Activated B cell treated with CpG ODN at 0.5 μM for 24 hours (primary cell): ENCODE measurements at regions of chrX and their contacts with region 1.

Region 1: GRCh38 chrX:139126493-139126892 is 404.0 kb upstream of the F9 start:
- DNase-seq: no peak
- ATAC-seq: no peak
- H3K4me3 Mint-ChIP-seq: no peak overlapping the region
- H3K27ac Mint-ChIP-seq: no peak overlapping the region
- H3K4me1 Mint-ChIP-seq: no peaks in the 10 kb centered on the region
- H3K27me3 Mint-ChIP-seq: peaks cover 2% of the 10 kb centered on the region
- CTCF ChIP-seq: no peak

Region 2: DNA sequence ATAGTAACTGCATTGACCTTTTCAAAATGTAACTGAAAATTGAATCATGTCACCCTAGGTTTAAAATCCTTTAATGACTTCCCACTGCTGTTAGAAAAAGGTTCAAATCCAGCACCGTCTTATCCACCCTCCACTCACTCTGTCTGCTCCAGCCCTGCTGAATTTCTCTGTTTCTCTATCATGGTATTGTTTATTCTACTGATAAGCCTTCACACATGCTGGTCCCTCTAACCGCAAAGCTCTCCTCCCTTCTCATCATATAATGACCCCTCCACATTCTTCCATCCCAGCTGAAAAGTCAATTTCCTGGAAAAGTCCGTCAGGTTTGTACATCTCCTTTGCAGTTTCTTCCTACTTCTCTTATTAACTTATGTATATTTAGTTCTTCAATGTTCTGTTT is 14.9 kb after region 1 on chrX:
- CTCF ChIA-PET with region 1: no interaction called
- POLR2A ChIA-PET with region 1: no interaction called
- intact Hi-C with region 1: no loop called
- DNase-seq: no peak
- ATAC-seq: no peak
- H3K4me3 Mint-ChIP-seq: no peak overlapping the region
- H3K27ac Mint-ChIP-seq: no peak overlapping the region
- H3K4me1 Mint-ChIP-seq: no peaks in the 10 kb centered on the region
- H3K27me3 Mint-ChIP-seq: no peaks in the 10 kb centered on the region
- CTCF ChIP-seq: no peak

Region 3: DNA sequence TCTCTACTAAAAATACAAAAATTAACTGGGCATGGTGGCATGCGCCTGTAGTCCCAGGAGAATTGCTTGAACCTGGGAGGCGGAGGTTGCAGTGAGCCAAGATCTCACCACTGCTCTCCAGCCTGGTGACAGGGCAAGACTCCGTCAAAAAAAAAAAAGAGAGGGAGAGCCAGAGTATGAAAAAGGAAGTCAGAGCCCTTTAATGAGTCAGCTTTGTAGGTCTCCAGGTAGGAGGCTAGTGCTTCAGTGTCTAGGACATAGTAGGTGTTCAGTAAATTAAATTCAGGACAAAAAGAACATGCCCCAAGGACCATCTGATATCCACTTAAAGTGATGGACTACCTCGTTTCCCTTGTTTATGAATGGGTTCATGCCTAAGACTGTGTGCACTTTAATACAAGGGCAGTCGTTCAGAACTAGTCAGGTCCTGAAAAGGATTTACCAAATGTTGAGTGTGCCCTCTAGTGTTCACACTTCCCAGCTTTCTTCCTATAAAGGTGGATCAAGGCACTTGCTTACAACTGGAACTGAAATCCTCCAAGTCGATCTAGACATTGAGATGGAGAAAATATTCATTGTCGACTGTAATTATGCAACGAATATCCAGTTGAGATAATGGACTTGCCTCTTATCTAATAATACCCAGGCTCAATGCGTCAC is 433.0 kb after region 1 on chrX:
- CTCF ChIA-PET with region 1: no interaction called
- POLR2A ChIA-PET with region 1: no interaction called
- intact Hi-C with region 1: loop called (anchors 2 kb)
- DNase-seq: no peak
- ATAC-seq: no peak
- H3K4me3 Mint-ChIP-seq: no peak overlapping the region
- H3K27ac Mint-ChIP-seq: no peak overlapping the region
- H3K4me1 Mint-ChIP-seq: peaks cover 6% of the 10 kb centered on the region
- H3K27me3 Mint-ChIP-seq: no peaks in the 10 kb centered on the region
- CTCF ChIP-seq: no peak

Region 4: DNA sequence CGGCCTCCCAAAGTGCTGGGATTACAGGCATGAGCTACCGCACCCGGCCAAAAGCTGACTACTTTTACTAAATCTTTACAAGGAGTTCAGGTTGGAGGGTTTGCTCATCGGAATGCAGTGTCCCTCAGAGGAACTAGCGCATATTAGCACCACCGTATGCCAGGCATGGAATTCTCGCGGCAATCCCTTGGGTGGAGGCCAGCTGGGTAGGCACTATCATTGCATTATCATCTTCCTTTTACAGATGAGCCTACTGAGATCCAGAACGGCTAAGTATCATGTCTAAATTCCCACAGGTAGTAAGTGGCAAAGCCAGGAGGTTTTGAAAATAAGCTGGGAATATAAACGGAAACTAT is 844.9 kb after region 1 on chrX:
- CTCF ChIA-PET with region 1: no interaction called
- POLR2A ChIA-PET with region 1: no interaction called
- intact Hi-C with region 1: loop called (anchors 10 kb)
- DNase-seq: no peak
- ATAC-seq: no peak
- H3K4me3 Mint-ChIP-seq: no peak overlapping the region
- H3K27ac Mint-ChIP-seq: no peak overlapping the region
- H3K4me1 Mint-ChIP-seq: no peaks in the 10 kb centered on the region
- H3K27me3 Mint-ChIP-seq: peaks cover 2% of the 10 kb centered on the region
- CTCF ChIP-seq: no peak